ENCODE measurements at regions of chr12 and their contacts with region 1.

Region 1: DNA sequence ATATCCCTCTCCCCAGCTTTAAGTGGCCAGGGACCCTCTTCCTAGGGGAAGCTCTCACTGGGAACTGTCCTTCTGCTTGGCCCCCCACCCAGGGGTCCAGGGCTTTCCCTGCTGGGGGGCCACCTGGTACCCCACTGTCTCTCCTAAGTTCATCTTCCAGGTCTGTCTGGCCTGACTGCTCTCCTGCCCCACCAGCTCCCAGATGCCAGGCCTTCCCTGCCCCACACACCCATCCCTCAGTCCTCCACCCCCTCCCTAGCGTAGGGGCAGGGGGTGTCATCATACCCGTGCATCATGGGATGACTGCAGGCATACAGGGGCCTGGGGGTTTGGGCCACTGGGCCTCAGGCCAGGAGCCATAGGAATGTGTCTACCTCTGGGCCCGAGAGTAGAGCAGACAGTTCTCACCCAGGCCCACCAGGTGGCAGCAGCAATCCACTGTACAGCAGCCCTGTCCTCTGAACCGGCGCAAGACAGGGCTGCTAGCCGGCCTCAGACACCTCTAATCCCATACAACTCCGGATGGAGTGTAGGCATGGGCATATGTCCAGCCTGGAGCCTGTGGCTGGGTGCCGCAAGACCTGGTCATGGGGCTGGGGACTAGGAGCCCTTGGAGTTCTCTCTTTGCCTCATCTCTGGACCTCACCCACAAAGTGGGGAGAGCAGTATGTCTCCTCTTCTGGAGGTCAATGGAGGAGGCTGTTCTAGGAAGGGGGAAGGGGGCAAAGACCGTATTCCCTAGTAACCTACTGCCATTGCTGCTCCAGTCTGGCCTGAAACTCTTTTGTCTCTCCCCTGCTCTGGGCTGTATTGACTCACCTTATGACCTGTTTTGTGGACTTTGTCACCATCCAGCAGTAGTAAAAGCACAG is 10.0 kb upstream of the SMARCD1 start:
- DNase-seq: peak; percentile 72
- H3K4me3 ChIP-seq: no peak overlapping the region
- H3K27ac ChIP-seq: no peak overlapping the region
- H3K4me1 ChIP-seq: no peaks in the 10 kb centered on the region
- H3K27me3 ChIP-seq: no peaks in the 10 kb centered on the region
- CTCF ChIP-seq: peak; percentile 96

Region 2: GRCh38 chr12:48882315-48882687 is 1192.9 kb before region 1 on chr12:
- CTCF ChIA-PET with region 1: no interaction called
- POLR2A ChIA-PET with region 1: no interaction called
- intact Hi-C with region 1: no loop called
- DNase-seq: no peak
- H3K4me3 ChIP-seq: no peak overlapping the region
- H3K27ac ChIP-seq: no peak overlapping the region
- H3K4me1 ChIP-seq: no peaks in the 10 kb centered on the region
- H3K27me3 ChIP-seq: no peaks in the 10 kb centered on the region
- CTCF ChIP-seq: no peak

Region 3: GRCh38 chr12:49776413-49776812 is 298.8 kb before region 1 on chr12:
- CTCF ChIA-PET with region 1: no interaction called
- POLR2A ChIA-PET with region 1: no interaction called
- intact Hi-C with region 1: loop called (anchors 5 kb)
- DNase-seq: peak; percentile 77
- H3K4me3 ChIP-seq: no peak overlapping the region
- H3K27ac ChIP-seq: no peak overlapping the region
- H3K4me1 ChIP-seq: peaks cover 5% of the 10 kb centered on the region
- H3K27me3 ChIP-seq: no peaks in the 10 kb centered on the region
- CTCF ChIP-seq: peak; percentile 83

Region 4: DNA sequence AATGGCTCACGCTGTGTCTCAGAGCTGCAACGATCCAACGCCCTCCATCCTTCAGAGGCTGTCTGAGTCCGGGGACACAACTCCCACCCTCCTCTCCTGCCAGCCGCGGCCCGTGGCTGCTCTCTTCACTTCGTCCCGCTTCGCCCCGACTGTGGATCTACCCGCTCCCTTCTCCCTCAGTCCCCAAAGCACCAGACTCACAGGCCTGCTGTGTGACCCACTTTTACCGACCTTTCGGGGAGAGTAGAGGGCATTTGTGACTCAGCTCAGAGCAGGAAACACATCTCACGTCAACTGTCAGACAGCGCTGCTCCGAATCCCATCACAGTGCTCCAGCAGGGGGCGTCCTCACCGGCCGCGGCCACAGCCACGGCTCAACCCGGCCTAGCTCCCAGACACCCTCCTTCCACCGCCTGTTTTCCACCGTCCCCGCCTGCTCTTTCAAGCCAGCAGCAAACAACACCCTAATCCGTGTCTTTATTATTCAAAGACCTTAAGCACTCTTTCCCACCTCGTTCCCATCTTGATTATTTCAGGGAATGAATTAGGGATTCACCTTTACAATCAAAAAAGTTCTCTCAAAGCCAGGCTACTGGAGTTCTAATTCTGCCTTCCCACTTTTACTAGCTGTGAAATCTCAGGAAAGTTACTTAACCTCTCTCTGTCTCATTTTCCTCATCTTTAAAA is 129.6 kb before region 1 on chr12:
- CTCF ChIA-PET with region 1: interaction called, 10 read pairs
- POLR2A ChIA-PET with region 1: no interaction called
- intact Hi-C with region 1: no loop called
- DNase-seq: peak; percentile 82
- H3K4me3 ChIP-seq: peak overlapping the region; percentile 30
- H3K27ac ChIP-seq: no peak overlapping the region
- H3K4me1 ChIP-seq: no peaks in the 10 kb centered on the region
- H3K27me3 ChIP-seq: no peaks in the 10 kb centered on the region
- CTCF ChIP-seq: peak; percentile 97

Region 5: DNA sequence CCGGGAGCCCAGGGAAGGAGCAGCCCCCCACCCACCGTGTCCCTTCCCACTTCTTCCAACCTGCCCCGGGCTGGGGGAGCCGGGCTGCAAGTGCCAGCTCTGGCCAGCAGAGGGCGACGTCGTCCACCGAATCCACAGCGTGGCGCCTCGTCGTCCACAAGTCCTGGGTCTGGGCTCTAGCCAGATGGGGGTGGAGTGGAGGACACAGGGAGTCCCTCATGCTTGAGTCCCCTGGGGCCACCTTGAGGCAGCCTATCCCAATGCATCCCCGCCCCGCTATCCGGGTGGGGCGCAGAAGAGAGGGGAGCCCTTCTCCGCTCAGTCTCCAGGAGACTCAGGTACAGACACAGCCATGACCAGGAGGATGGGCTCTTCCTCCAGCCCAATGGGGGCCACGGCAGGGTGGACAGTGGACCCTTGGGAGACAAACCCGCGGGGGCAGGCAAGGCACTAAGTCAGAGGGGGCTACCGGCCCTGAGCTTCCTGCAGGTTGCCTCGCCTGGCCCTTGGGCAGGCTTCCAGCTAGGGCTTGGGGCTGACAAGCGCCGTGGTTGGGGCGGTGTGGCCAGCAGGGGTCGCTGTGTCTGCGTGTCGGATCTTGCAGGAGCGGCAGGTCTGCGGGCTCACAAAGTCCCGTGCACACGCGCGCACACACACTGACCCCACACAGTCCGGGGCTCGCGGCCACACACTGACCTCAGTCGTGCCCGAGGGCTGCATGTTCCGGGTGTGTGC is 108.0 kb before region 1 on chr12:
- CTCF ChIA-PET with region 1: interaction called, 53 read pairs
- POLR2A ChIA-PET with region 1: no interaction called
- intact Hi-C with region 1: loop called (anchors 1 kb)
- DNase-seq: peak; percentile 94
- H3K4me3 ChIP-seq: peak overlapping the region; percentile 47
- H3K27ac ChIP-seq: no peak overlapping the region
- H3K4me1 ChIP-seq: no peaks in the 10 kb centered on the region
- H3K27me3 ChIP-seq: peaks cover under 1% of the 10 kb centered on the region
- CTCF ChIP-seq: peak; percentile 80

Region 6: DNA sequence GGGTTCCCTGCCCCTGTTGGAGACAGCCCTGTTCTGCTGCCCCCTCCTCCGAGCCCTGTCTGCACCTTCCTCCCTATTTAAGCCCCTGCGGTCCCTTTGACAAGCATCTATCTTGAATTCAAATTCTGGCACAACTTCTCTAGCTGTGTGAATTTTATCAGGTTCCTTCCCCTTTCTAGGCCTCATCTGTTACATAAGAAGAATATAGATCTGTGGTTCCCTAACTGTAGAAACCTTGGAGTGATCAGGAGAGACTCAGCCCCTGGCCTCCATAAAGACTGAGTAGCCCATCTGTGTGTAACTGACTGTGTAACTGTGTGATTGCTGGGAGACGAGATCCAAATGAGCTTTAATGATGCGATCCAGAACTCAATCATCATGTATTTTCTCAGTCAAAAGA is 36.8 kb before region 1 on chr12:
- CTCF ChIA-PET with region 1: interaction called, 41 read pairs
- POLR2A ChIA-PET with region 1: no interaction called
- intact Hi-C with region 1: loop called (anchors 1 kb)
- DNase-seq: no peak
- H3K4me3 ChIP-seq: no peak overlapping the region
- H3K27ac ChIP-seq: no peak overlapping the region
- H3K4me1 ChIP-seq: no peaks in the 10 kb centered on the region
- H3K27me3 ChIP-seq: no peaks in the 10 kb centered on the region
- CTCF ChIP-seq: no peak

Region 7: DNA sequence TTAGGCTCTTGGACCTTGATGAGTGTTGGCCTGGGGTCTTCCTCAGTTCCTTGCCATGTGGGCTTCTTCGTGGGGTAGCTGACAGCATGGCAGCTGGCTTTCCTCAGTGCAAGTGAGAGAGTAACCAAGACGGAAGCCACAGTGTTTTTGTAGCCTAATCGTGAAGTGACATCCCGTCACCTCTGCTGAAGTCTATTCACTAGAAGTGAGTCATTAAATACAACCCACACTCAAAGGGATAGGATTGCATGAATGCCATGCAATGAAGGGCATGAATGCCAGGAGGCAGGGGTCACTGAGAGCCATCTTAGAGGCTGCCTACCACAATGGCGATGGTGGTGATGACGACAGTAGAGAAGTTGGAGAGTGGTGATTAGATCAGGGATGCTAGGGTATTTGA is 31.3 kb before region 1 on chr12:
- CTCF ChIA-PET with region 1: interaction called, 41 read pairs
- POLR2A ChIA-PET with region 1: no interaction called
- intact Hi-C with region 1: loop called (anchors 1 kb)
- DNase-seq: no peak
- H3K4me3 ChIP-seq: no peak overlapping the region
- H3K27ac ChIP-seq: no peak overlapping the region
- H3K4me1 ChIP-seq: no peaks in the 10 kb centered on the region
- H3K27me3 ChIP-seq: no peaks in the 10 kb centered on the region
- CTCF ChIP-seq: no peak

Region 8: GRCh38 chr12:50314629-50315312 is 239.6 kb after region 1 on chr12:
- CTCF ChIA-PET with region 1: no interaction called
- POLR2A ChIA-PET with region 1: no interaction called
- intact Hi-C with region 1: loop called (anchors 1 kb)
- DNase-seq: peak; percentile 75
- H3K4me3 ChIP-seq: no peak overlapping the region
- H3K27ac ChIP-seq: no peak overlapping the region
- H3K4me1 ChIP-seq: no peaks in the 10 kb centered on the region
- H3K27me3 ChIP-seq: no peaks in the 10 kb centered on the region
- CTCF ChIP-seq: peak; percentile 76

Measured in A673 (cell line).